Prostate gland (tissue), 2 donors: ENCODE measurements at regions of chr12 and their contacts with region 1.

Region 1: DNA sequence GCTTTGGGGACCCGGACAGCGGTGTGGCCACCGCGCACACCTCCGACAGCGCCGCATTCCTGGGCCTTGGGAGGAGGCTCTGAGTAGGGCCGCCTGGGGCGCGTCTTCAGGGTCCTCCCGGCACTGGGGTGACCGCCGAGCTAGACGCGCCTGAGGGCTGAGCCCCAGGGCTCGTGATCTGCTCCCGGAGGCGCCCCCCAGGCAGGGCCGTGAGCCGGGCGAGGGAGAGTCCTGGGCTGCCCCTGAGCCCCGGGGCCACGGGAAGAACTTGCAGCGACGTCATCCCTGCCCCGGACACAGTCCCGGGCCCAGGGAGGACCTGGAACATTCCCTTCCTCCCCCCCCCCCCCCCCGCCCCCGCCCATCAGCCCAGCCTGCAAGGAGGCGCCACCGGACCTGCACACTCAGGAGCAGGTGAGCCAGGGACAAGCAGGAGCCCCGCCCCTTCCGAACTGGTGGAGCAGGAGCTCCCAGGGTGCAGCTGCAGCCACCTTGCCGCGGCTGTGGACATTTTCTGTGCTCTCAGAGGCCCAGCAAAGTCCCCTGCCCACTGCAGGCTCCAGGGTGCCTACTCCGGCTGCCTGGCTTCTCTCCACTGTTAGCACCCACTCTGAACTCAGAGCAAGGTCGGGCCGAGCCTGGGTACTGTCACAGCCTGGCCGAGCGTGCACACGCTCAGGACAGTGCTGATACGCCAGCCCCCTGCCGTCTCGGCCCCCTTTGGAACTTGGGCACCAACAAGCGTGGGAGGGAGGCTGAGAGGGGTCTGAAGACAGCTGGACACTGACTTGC is 50.7 kb downstream of the A2M start:
- DNase-seq: peak; percentile 93
- H3K4me3 ChIP-seq: peak overlapping the region; percentile 80 to 86
- H3K27ac ChIP-seq: peak overlapping the region; percentile 98 to 99
- H3K4me1 ChIP-seq: peaks cover 5% of the 10 kb centered on the region
- H3K27me3 ChIP-seq: no peaks in the 10 kb centered on the region
- CTCF ChIP-seq: peak in 1 of 4 experiments; percentile 6
- POLR2A ChIP-seq: peak; percentile 94

Region 2: DNA sequence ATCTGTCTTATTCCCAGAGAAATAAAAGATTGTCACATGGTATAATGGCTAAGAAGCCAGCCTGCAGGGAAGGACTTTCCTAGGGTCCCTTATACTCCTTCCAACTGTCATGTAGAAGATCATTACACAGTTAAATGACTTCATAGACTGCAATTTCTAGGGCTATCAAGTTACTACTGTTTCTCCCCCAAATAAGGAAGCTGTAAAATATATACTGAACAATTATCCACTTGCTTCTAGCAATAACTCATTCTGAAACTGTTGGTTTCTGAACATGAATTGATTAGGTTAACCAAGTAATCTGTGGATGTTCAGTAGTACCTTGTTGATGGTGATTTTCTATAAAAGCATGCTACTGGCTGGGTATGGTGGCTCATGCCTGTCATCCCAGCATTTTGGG is 198.0 kb before region 1 on chr12:
- intact Hi-C with region 1: no loop called
- DNase-seq: no peak
- H3K4me3 ChIP-seq: no peak overlapping the region
- H3K27ac ChIP-seq: no peak overlapping the region
- H3K4me1 ChIP-seq: no peaks in the 10 kb centered on the region
- H3K27me3 ChIP-seq: no peaks in the 10 kb centered on the region
- CTCF ChIP-seq: no peak
- POLR2A ChIP-seq: no peak

Region 3: GRCh38 chr12:9106610-9107541 is 41.9 kb after region 1 on chr12:
- intact Hi-C with region 1: loop called (anchors 5 kb)
- DNase-seq: no peak
- H3K4me3 ChIP-seq: no peak overlapping the region
- H3K27ac ChIP-seq: no peak overlapping the region
- H3K4me1 ChIP-seq: no peaks in the 10 kb centered on the region
- H3K27me3 ChIP-seq: no peaks in the 10 kb centered on the region
- CTCF ChIP-seq: no peak
- POLR2A ChIP-seq: no peak